Thyroid gland (tissue), 4 donors: ENCODE measurements at regions of chr5 and their contacts with region 1.

Region 1: DNA sequence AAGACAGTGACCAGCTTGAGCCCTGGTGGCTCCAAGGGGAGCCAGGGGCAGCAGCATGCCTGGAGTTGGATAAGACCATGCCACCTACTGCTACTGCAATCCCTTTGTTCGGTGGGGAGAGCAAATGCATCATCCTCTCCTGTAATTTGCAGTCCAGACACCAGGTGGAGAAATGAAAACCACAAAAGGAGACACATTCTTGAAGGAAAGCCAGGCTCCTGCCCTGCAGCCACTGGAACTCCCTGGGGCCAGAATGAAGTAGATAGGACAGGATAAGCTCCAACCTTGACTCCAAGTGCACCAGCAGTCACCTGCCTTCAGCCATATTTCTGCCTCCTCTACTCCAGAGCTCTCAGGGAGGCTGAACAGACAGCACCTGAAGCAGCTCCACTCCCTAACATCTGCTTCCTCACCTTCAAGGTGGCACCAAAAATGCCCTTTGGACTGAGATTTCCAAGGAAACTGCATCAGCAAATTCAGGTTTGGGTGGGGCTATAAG is 65.1 kb upstream of the IQGAP2 start:
- DNase-seq: peak; percentile 72 to 77
- H3K4me3 ChIP-seq: no peak overlapping the region
- H3K27ac ChIP-seq: no peak overlapping the region
- H3K4me1 ChIP-seq: peaks cover 0 to 7% of the 10 kb centered on the region in 2 donors
- H3K27me3 ChIP-seq: no peaks in the 10 kb centered on the region
- CTCF ChIP-seq: peak; percentile 32 to 84 (median 72)
- POLR2A ChIP-seq: no peak

Region 2: DNA sequence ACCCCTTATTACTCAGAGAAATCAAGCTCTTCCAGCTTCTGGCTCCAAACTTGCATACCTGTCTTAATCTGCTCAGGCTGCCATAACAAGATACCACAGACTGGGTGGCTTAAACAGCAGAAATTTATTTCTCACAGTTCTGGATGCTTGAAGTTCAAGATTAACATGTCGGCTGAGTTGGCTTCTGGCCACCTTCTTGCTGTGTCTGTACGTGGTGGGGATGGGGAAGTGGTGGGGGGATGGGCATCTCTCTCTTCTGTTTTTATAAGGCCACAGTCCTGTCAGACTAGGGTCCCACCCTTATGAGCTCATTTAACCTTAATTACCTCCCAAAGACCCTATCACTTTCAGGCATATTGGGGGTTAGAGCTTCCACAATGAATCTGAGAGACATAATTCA is 114.3 kb before region 1 on chr5:
- intact Hi-C with region 1: no loop called
- DNase-seq: no peak
- H3K4me3 ChIP-seq: no peak overlapping the region
- H3K27ac ChIP-seq: no peak overlapping the region
- H3K4me1 ChIP-seq: no peaks in the 10 kb centered on the region
- H3K27me3 ChIP-seq: no peaks in the 10 kb centered on the region
- CTCF ChIP-seq: no peak
- POLR2A ChIP-seq: no peak

Region 3: GRCh38 chr5:76582230-76583162 is 244.5 kb after region 1 on chr5:
- intact Hi-C with region 1: loop called (anchors 5 kb)
- DNase-seq: no peak
- H3K4me3 ChIP-seq: no peak overlapping the region
- H3K27ac ChIP-seq: no peak overlapping the region
- H3K4me1 ChIP-seq: peaks cover 0 to 6% of the 10 kb centered on the region in 2 donors
- H3K27me3 ChIP-seq: no peaks in the 10 kb centered on the region
- CTCF ChIP-seq: no peak
- POLR2A ChIP-seq: no peak

Region 4: DNA sequence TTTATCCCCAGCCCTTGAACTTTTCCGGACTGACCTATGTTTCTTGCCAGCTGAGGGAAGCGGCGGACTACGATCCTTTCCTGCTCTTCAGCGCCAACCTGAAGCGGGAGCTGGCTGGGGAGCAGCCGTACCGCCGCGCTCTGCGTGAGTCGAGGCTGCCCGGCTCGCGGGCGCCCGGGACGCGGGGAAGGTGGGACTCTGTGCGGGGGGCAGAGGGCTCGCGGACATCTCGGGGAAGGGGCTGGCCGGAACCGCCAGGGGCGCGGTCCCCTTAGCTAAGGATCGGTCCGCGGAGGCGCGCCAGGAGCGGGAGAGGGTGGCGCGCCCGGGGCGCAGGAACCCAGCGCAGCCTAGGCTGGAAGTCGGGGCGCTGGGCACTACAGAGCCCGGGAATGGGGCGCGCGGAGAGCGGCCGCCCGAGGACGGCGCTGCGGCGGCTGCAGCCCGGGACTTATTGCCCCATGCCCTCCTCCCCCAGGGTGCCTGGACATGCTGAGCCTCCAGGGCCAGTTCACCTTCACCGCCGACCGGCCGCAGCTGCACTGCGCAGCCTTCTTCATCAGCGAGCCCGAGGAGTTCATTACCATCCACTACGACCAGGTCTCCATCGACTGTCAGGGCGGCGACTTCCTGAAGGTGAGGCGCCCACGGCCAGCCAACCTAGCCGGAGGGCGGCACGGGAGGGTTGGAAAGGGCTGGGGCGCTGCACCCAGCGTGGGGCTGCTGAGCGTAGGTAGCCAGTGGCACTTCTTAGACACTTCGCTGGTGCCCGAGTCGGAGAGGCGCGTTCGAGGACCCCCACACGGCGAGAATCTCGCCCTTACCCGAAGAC is 615.8 kb after region 1 on chr5:
- intact Hi-C with region 1: no loop called
- DNase-seq: no peak
- H3K4me3 ChIP-seq: peak overlapping the region in 2 of 3 donors; percentile 0 to 28
- H3K27ac ChIP-seq: no peak overlapping the region
- H3K4me1 ChIP-seq: no peaks in the 10 kb centered on the region
- H3K27me3 ChIP-seq: peaks cover 13% of the 10 kb centered on the region
- CTCF ChIP-seq: no peak
- POLR2A ChIP-seq: no peak